ENCODE measurements at regions of chr7 and their contacts with region 1.

Region 1: DNA sequence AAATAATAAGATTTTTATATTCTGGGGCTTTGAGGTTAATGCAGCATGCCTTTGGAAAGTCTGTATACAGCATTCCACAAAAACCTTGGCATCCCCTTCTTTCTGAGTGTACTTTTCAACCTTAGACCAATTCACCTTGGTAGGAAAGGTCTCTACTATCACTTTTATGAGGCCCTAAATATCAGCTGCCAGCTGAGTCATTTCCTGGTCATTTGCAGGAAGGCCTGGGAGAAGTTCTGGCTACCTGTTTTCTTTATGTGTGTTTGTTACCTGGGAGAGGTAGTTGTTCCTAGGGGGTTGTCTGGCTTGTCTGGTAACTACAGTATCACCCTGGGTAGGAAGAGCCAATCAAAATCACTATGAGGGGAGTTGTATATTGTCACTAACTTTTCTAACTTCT is 4.1 kb downstream of the SPAM1 start:
- DNase-seq: peak; percentile 79
- H3K4me3 ChIP-seq: no peak overlapping the region
- H3K27ac ChIP-seq: peak overlapping the region; percentile 82
- H3K4me1 ChIP-seq: peaks cover 12% of the 10 kb centered on the region
- H3K27me3 ChIP-seq: no peaks in the 10 kb centered on the region
- CTCF ChIP-seq: no peak

Region 2: GRCh38 chr7:123472750-123473445 is 456.2 kb before region 1 on chr7:
- CTCF ChIA-PET with region 1: no interaction called
- dilution Hi-C with region 1: no loop called
- in situ Hi-C with region 1: no loop called
- intact Hi-C with region 1: no loop called
- DNase-seq: no peak
- H3K4me3 ChIP-seq: no peak overlapping the region
- H3K27ac ChIP-seq: no peak overlapping the region
- H3K4me1 ChIP-seq: no peaks in the 10 kb centered on the region
- H3K27me3 ChIP-seq: no peaks in the 10 kb centered on the region
- CTCF ChIP-seq: no peak

Region 3: DNA sequence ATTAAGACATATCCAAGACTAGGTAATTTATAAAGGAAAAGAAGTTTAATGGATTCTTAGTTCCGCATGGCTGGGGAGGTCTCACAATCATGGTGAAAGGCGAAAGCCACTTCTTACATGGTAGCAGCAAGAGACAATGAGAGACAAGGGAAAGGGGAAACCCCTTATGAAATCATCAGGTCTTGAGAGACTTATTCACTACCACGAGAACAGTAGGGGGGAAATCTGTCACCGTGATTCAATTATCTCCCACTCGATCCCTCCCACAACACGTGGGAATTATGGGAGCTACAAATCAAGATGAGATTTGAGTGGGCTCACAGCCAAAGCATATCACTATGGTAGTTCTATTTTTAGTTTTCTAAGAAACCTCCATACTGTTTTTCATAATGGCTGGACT is 32.6 kb after region 1 on chr7:
- CTCF ChIA-PET with region 1: no interaction called
- dilution Hi-C with region 1: no loop called
- in situ Hi-C with region 1: no loop called
- intact Hi-C with region 1: loop called (anchors 1 kb)
- DNase-seq: peak; percentile 32
- H3K4me3 ChIP-seq: no peak overlapping the region
- H3K27ac ChIP-seq: no peak overlapping the region
- H3K4me1 ChIP-seq: peaks cover 5% of the 10 kb centered on the region
- H3K27me3 ChIP-seq: peaks cover 3% of the 10 kb centered on the region
- CTCF ChIP-seq: no peak